Naive thymus-derived CD4-positive, alpha-beta T cell (primary cell): ENCODE measurements at regions of chr12 and their contacts with region 1.

Region 1: GRCh38 chr12:54993161-54993835 is 8.7 kb upstream of the TESPA1 start:
- DNase-seq: peak in 8 of 9 donors; percentile 42 to 83 (median 70)
- ATAC-seq: peak; percentile 91
- H3K4me3 ChIP-seq: no peak overlapping the region
- H3K4me3 Mint-ChIP-seq: peak overlapping the region in 4 of 10 donors; percentile 13 to 43 (median 29)
- H3K27ac ChIP-seq: peak overlapping the region; percentile 66
- H3K27ac Mint-ChIP-seq: peak overlapping the region in 8 of 9 donors; percentile 15 to 98 (median 71)
- H3K4me1 ChIP-seq: peaks cover 23 to 37% of the 10 kb centered on the region in 2 donors
- H3K4me1 Mint-ChIP-seq: peaks cover 34 to 59% (median 47%) of the 10 kb centered on the region in 7 donors
- H3K27me3 ChIP-seq: no peaks in the 10 kb centered on the region
- H3K27me3 Mint-ChIP-seq: peaks cover 0 to 4% (median 0%) of the 10 kb centered on the region in 5 donors

Region 2: DNA sequence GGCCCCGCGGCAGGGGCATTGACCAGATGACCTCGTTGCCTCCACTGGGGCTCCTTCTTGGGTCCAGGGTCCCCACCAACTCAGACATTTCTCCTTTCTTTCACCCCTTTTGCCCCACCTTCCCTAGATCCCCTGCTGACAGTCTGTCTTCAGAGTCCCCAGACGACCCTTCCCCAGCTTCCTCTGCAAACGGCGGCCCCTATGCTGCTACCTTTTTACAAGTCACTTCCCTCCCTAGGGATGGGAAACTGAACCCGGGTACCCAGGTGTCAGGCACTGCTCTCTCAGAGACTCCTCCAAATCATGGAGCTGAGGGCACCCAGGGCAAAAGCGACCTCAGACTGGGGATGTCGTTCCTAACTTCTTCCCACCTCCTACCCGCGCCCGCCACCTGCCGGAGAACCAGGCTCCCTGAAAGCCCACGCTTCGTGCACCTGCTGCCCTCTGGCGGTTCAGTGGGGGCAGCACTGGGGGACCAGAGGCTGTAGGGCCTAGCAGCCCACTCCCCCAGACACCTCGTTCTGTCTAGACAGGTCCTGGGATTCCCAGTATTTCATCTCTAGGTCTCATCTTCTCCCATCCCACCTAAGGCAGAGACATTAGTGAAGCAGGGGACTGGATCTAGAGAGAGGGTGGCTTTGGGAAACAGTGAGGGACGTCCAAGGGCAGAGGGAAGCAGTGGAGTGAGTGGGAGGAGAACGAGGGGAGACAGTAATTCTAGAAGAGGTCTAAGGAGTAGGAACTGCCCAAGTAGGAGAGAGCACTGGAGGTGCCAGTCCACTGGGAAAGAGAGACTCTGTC is 613.7 kb before region 1 on chr12:
- CTCF ChIA-PET with region 1: no interaction called
- POLR2A ChIA-PET with region 1: no interaction called
- intact Hi-C with region 1: no loop called
- DNase-seq: peak; percentile 73 to 93 (median 84)
- ATAC-seq: peak; percentile 87
- H3K4me3 ChIP-seq: no peak overlapping the region
- H3K4me3 Mint-ChIP-seq: peak overlapping the region; percentile 43 to 79 (median 59)
- H3K27ac ChIP-seq: no peak overlapping the region
- H3K27ac Mint-ChIP-seq: peak overlapping the region in 3 of 9 donors; percentile 0 to 46 (median 38)
- H3K4me1 ChIP-seq: peaks cover 0 to 3% of the 10 kb centered on the region in 2 donors
- H3K4me1 Mint-ChIP-seq: peaks cover 6 to 19% (median 6%) of the 10 kb centered on the region in 7 donors
- H3K27me3 ChIP-seq: no peaks in the 10 kb centered on the region
- H3K27me3 Mint-ChIP-seq: peaks cover 0 to 5% (median 0%) of the 10 kb centered on the region in 5 donors

Region 3: GRCh38 chr12:54723379-54724256 is 269.7 kb before region 1 on chr12:
- CTCF ChIA-PET with region 1: interaction called, 18 read pairs
- POLR2A ChIA-PET with region 1: interaction called, 5 read pairs
- intact Hi-C with region 1: loop called in 1 of 2 experiments (anchors 1 kb)
- DNase-seq: peak in 7 of 9 donors; percentile 21 to 50 (median 35)
- ATAC-seq: peak; percentile 73
- H3K4me3 ChIP-seq: no peak overlapping the region
- H3K4me3 Mint-ChIP-seq: no peak overlapping the region
- H3K27ac ChIP-seq: no peak overlapping the region
- H3K27ac Mint-ChIP-seq: peak overlapping the region in 1 of 9 donors; percentile 18
- H3K4me1 ChIP-seq: no peaks in the 10 kb centered on the region
- H3K4me1 Mint-ChIP-seq: peaks cover 2 to 24% (median 10%) of the 10 kb centered on the region in 7 donors
- H3K27me3 ChIP-seq: no peaks in the 10 kb centered on the region
- H3K27me3 Mint-ChIP-seq: peaks cover 0 to 29% (median 8%) of the 10 kb centered on the region in 5 donors

Region 4: DNA sequence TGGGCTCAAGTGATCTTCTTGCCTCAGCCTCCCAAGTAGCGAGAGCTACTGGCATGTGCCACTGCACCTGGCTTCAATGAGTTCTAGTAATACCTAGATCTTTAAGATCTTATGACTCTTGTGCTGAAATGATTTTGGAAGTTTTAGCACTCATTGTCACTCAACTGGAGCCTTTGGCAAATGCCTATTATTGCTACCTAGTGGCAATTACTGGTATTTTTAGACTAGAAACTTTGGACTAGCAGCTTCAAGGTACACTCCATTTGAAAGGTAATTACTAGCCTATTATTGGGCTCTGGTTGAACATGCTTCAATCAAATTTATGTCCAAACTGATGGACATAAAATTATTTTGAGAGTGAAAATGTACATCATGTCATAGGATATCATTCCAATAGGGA is 219.7 kb before region 1 on chr12:
- CTCF ChIA-PET with region 1: interaction called, 11 read pairs
- POLR2A ChIA-PET with region 1: no interaction called
- intact Hi-C with region 1: no loop called
- DNase-seq: no peak
- ATAC-seq: no peak
- H3K4me3 ChIP-seq: no peak overlapping the region
- H3K4me3 Mint-ChIP-seq: no peak overlapping the region
- H3K27ac ChIP-seq: no peak overlapping the region
- H3K27ac Mint-ChIP-seq: no peak overlapping the region
- H3K4me1 ChIP-seq: peaks cover 0 to 4% of the 10 kb centered on the region in 2 donors
- H3K4me1 Mint-ChIP-seq: peaks cover 2 to 47% (median 40%) of the 10 kb centered on the region in 7 donors
- H3K27me3 ChIP-seq: no peaks in the 10 kb centered on the region
- H3K27me3 Mint-ChIP-seq: peaks cover 0 to 19% (median 3%) of the 10 kb centered on the region in 5 donors

Region 5: GRCh38 chr12:54958048-54958658 is 35.1 kb before region 1 on chr12:
- CTCF ChIA-PET with region 1: interaction called, 37 read pairs
- POLR2A ChIA-PET with region 1: interaction called, 309 read pairs
- intact Hi-C with region 1: loop called (anchors 2 kb)
- DNase-seq: peak in 7 of 9 donors; percentile 28 to 66 (median 58)
- ATAC-seq: peak; percentile 73
- H3K4me3 ChIP-seq: no peak overlapping the region
- H3K4me3 Mint-ChIP-seq: peak overlapping the region in 7 of 10 donors; percentile 1 to 65 (median 40)
- H3K27ac ChIP-seq: peak overlapping the region; percentile 0
- H3K27ac Mint-ChIP-seq: peak overlapping the region; percentile 5 to 94 (median 77)
- H3K4me1 ChIP-seq: peaks cover 33 to 69% of the 10 kb centered on the region in 2 donors
- H3K4me1 Mint-ChIP-seq: peaks cover 64 to 100% (median 95%) of the 10 kb centered on the region in 7 donors
- H3K27me3 ChIP-seq: no peaks in the 10 kb centered on the region
- H3K27me3 Mint-ChIP-seq: no peaks in the 10 kb centered on the region

Region 6: GRCh38 chr12:55037351-55037987 is 44.2 kb after region 1 on chr12:
- CTCF ChIA-PET with region 1: interaction called, 7 read pairs
- POLR2A ChIA-PET with region 1: interaction called, 6 read pairs
- intact Hi-C with region 1: loop called in 1 of 2 experiments (anchors 2 kb)
- DNase-seq: no peak
- ATAC-seq: no peak
- H3K4me3 ChIP-seq: no peak overlapping the region
- H3K4me3 Mint-ChIP-seq: peak overlapping the region in 9 of 10 donors; percentile 45 to 87 (median 76)
- H3K27ac ChIP-seq: no peak overlapping the region
- H3K27ac Mint-ChIP-seq: peak overlapping the region in 8 of 9 donors; percentile 67 to 90 (median 80)
- H3K4me1 ChIP-seq: peaks cover 15 to 46% of the 10 kb centered on the region in 2 donors
- H3K4me1 Mint-ChIP-seq: peaks cover 17 to 67% (median 65%) of the 10 kb centered on the region in 7 donors
- H3K27me3 ChIP-seq: no peaks in the 10 kb centered on the region
- H3K27me3 Mint-ChIP-seq: peaks cover 0 to 29% (median 0%) of the 10 kb centered on the region in 5 donors